Colonic mucosa (tissue), 4 donors: ENCODE measurements at regions of chr14 and their contacts with region 1.

Region 1: DNA sequence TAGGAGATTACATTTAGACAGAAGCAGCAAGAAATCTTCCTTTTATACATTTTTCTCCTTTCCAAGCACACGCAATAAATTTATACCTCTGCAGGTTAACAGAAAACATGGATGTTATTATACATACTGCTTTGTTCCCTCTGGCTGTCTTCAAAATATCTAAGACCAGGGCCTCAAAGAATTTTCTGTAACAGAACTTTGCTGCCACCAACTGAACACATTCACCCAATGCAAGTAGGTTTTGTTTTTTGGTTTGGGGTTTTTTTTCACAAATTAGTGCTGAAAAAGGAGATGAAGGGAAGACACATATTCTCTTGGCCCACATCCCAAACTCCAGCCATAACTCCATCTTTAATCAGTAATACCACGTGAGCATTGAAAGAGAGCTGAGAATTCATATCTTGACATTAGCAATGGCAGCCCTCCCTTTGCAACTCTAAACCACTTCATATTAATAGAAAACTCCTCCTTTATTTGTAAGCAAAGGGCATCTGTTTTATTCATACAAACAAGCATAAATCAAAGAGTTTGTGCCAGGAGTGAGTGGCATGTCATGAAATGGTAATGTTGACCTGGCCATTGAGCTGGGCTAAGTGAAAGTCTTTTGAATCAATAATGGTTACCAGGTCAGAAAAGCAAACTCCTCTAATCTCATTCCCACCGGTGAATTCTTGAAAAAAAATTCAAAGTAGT is 150.8 kb upstream of the FSCB start:
- DNase-seq: no peak
- H3K4me3 ChIP-seq: no peak overlapping the region
- H3K27ac ChIP-seq: no peak overlapping the region
- H3K4me1 ChIP-seq: no peaks in the 10 kb centered on the region
- H3K27me3 ChIP-seq: no peaks in the 10 kb centered on the region
- CTCF ChIP-seq: peak; percentile 12

Region 2: DNA sequence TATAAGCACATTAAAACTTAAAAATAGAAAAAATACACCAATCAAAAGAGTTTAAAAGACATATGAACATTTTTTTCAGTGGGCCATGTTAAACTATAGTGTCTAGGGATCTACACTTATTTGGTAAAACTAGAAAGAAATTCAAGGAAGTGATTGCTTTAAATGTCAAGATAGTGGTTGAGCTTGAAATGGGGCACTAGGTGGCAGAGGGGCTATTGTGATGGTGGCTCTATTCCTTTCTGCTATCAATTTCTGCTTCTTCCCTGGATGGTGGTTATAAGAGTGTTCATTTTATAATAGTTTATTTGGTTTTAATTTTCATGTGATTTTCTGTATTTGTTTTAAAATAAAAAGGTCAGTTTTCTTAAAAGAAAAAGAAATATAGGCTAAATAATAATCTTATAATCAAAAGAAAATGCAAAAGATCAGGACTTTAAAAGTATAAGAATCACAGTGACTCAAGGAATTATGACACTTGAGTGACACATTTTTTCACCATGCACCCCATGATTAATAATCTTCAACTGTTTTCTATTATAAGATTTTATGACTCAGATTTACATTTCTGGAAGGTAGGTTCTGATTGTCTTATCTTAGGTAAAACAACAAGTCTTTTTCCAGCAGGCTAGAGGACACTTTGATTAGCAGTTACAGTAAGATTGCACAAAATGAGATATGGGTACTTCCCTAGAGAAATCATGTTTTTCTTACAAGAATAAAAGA is 288.3 kb before region 1 on chr14:
- intact Hi-C with region 1: loop called (anchors 10 kb)
- DNase-seq: no peak
- H3K4me3 ChIP-seq: no peak overlapping the region
- H3K27ac ChIP-seq: no peak overlapping the region
- H3K4me1 ChIP-seq: no peaks in the 10 kb centered on the region
- H3K27me3 ChIP-seq: no peaks in the 10 kb centered on the region
- CTCF ChIP-seq: no peak